Right ventricle myocardium inferior (tissue), 1 donor: ENCODE measurements at regions of chr18 and their contacts with region 1.

Region 1: DNA sequence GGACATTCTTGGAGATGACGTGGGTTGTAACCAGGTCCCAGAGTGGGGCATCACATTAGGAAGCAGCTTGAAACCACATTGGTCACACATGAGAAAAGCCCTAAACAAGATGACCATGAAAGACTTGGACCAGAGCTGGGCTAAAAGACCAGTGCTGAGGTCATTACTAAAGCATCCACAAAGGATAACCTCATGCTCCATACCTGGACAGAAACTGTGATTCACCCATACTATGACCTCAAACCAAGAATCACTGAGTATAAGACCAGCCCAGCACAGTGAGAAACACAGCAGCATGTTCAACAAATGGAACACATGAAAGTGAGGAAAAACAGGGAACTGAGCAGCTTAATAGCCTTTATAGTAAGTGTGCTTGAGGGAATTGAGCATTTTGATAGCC is 635.5 kb upstream of the NETO1 start:
- DNase-seq: no peak
- ATAC-seq: no peak

Region 2: GRCh38 chr18:73741946-73742345 is 238.6 kb after region 1 on chr18:
- intact Hi-C with region 1: loop called (anchors 5 kb)
- DNase-seq: no peak
- ATAC-seq: no peak